Activated CD4-positive, alpha-beta T cell treated with anti-CD3 and anti-CD28 coated beads, Interleukin-2, amount 10 ng/mL, durations not matched to agents 24 days and 14 days (primary cell): ENCODE measurements at regions of chr2 and their contacts with region 1.

Region 1: GRCh38 chr2:109128048-109128465 is 948 bp upstream of the SH3RF3 start:
- DNase-seq: peak; percentile 87
- H3K4me3 Mint-ChIP-seq: peak overlapping the region; percentile 73
- H3K27ac Mint-ChIP-seq: no peak overlapping the region
- H3K4me1 Mint-ChIP-seq: peaks cover 22% of the 10 kb centered on the region
- H3K27me3 Mint-ChIP-seq: peaks cover 49% of the 10 kb centered on the region

Region 2: GRCh38 chr2:108927936-108928659 is 200.0 kb before region 1 on chr2:
- intact Hi-C with region 1: loop called (anchors 10 kb)
- DNase-seq: peak; percentile 80
- H3K4me3 Mint-ChIP-seq: no peak overlapping the region
- H3K27ac Mint-ChIP-seq: peak overlapping the region; percentile 28
- H3K4me1 Mint-ChIP-seq: no peaks in the 10 kb centered on the region
- H3K27me3 Mint-ChIP-seq: peaks cover 1% of the 10 kb centered on the region

Region 3: DNA sequence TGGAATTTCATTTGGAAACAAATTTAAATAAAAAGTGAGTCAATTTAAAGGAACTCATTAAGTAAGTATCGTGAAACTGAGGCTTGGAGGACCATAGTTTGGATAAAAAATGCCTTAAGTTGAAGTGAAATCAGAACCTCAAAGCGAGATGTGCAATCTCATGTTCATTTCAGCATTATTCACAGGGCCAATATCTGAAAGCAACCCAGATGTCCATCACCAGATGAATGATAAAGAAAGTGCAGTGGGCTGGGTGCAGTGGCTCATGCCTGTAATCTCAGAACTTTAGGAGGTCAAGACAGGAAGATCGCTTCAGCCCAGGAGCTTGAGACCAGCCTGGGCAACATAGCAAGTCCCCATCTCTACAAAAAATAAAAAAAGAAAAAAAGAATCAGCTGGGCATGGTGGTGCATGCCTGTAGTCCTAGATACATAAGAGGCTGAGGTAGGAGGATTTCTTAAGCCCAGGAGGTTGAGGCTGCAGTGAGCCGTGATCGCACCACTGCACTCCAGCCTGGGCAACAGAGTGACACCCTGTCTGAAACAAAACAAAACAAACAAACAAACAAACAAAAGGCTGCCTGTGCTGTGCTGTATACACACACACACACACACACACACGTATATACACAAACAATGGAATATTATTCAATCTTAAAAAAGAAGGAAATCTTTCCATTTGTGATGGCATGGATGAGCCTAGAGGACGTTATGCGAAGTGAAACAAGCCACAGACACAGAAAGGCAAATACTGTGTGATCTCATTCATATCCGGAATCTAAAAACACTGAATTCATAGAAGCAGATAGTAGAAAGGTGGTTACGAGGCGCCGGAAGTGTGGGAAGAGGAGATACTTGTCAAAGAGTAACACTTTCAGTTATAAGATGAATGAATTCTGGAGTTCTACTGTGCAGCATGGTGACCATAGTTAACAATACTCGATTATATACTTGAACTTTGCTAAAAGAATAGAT is 15.4 kb after region 1 on chr2:
- intact Hi-C with region 1: loop called (anchors 2 kb)
- DNase-seq: peak; percentile 89
- H3K4me3 Mint-ChIP-seq: peak overlapping the region; percentile 60
- H3K27ac Mint-ChIP-seq: peak overlapping the region; percentile 76
- H3K4me1 Mint-ChIP-seq: peaks cover 42% of the 10 kb centered on the region
- H3K27me3 Mint-ChIP-seq: peaks cover 48% of the 10 kb centered on the region

Region 4: GRCh38 chr2:109331896-109332848 is 204.1 kb after region 1 on chr2:
- intact Hi-C with region 1: loop called (anchors 5 kb)
- DNase-seq: peak; percentile 75
- H3K4me3 Mint-ChIP-seq: peak overlapping the region; percentile 83
- H3K27ac Mint-ChIP-seq: peak overlapping the region; percentile 26
- H3K4me1 Mint-ChIP-seq: peaks cover 31% of the 10 kb centered on the region
- H3K27me3 Mint-ChIP-seq: peaks cover 28% of the 10 kb centered on the region

Region 5: GRCh38 chr2:109510136-109511028 is 382.3 kb after region 1 on chr2:
- intact Hi-C with region 1: loop called (anchors 1 kb)
- DNase-seq: peak; percentile 92
- H3K4me3 Mint-ChIP-seq: no peak overlapping the region
- H3K27ac Mint-ChIP-seq: no peak overlapping the region
- H3K4me1 Mint-ChIP-seq: no peaks in the 10 kb centered on the region
- H3K27me3 Mint-ChIP-seq: peaks cover 2% of the 10 kb centered on the region